Lower leg skin (tissue), 4 donors: ENCODE measurements at regions of chr9 and their contacts with region 1.

Region 1: DNA sequence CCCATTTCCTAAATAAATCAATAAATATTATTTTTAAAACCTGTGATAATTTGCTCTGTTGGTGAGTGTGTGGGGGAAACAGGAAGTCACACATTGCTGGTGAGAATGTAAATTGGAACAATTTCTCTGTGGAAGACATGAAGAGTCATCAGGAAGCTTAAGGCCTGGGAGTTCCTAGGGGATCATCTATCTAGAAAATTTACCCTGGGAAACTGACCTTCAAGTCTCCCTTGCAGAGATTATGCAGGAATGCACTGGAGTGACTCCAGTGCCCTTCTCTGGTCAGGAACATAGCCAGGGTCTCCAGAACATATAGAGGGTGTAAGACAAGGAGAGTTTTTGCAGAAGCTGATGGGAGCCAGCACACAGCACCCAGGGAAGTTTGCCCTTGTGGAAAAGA is 13.0 kb upstream of the GCNT1 start:
- DNase-seq: no peak
- H3K4me3 ChIP-seq: no peak overlapping the region
- CTCF ChIP-seq: no peak
- POLR2A ChIP-seq: no peak

Region 2: GRCh38 chr9:76463211-76463610 is 17.2 kb after region 1 on chr9:
- intact Hi-C with region 1: no loop called
- DNase-seq: no peak
- H3K4me3 ChIP-seq: no peak overlapping the region
- CTCF ChIP-seq: no peak
- POLR2A ChIP-seq: no peak

Region 3: DNA sequence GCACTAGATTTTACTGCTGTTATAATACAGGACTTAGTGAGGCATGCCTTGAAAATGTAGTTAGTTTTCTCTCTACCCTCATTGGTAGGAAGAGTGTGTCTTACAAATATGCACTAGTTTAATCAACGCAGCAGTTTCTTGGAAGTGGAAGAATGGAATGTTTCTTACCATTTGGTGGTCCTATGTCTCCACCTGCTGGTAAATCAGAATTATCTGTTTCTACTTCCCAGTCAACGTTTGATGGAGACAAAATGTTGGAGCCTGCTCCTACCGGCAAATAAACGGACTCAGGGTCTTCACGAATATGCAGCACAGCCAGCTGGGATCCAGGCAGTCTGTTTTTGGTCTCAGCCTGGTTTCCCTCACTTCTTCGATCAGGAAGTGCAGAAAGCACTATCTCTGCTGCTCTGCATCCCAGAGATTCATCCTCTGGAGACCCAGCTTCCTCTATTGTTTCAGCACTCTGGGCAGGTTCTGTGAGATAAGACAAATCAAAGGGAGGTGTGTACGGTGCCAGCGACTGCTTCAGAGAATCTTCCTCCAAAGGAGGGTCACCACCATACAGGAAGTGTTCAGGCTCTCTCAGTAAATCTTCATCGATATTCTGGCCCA is 258.7 kb after region 1 on chr9:
- intact Hi-C with region 1: loop called (anchors 5 kb)
- DNase-seq: no peak
- H3K4me3 ChIP-seq: no peak overlapping the region
- CTCF ChIP-seq: no peak
- POLR2A ChIP-seq: no peak